ENCODE measurements at regions of chr3 and their contacts with region 1.

Region 1: DNA sequence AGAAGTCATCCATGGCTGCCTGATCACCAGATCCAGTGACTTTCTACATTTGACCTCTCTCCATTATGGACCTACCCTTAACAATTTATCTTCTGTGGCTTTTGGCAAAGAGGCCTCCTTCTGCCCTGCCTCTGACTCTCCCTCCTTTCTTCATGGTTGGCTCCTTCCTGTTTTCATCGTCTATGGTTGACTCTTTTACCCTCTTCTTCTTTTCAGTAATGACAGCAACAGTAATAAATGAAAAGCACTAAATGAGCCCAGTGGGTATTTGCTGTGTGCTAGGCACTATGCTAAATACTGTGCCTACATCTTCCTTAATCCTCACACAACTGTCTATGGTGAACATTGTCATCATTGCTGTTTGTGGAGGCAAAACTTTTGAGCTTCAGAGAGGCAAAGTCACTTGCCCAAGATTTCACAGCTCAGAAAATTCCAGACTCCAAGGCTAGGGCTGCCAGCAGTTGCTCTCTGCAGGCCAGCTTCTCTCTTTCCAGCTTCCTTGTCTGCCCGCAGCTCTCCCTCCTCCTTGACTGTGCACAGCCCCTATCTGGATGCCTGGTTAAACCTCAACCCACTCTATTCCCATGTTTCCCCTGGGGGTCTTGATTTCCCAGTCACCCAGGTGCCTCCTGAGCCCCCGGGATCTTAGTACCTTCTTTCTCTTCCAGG is 24.6 kb downstream of the ITPR1 start:
- H3K4me3 Mint-ChIP-seq: peak overlapping the region; percentile 2
- H3K27ac Mint-ChIP-seq: peak overlapping the region; percentile 45
- H3K4me1 Mint-ChIP-seq: peaks cover 49% of the 10 kb centered on the region
- H3K27me3 Mint-ChIP-seq: no peaks in the 10 kb centered on the region

Region 2: DNA sequence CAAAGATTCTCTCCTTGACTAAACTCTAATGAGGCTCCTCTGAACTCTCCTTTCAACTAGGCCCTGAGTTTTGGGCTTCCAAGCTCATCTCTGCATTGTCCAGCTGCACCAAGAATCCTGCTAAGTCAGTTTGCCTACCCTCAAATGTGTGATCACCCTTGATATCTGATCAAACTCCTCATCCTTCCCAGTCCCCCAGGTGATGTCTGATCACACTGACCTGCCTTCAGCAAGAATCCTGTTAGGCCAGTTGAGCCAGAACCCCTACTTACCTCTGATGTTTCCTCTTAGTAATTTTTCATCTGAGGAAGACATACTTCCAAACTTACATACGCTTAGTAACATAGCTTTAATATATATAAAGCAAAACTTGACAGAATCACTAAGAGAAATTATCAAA is 79.5 kb before region 1 on chr3:
- intact Hi-C with region 1: no loop called
- H3K4me3 Mint-ChIP-seq: no peak overlapping the region
- H3K27ac Mint-ChIP-seq: no peak overlapping the region
- H3K4me1 Mint-ChIP-seq: peaks cover 5% of the 10 kb centered on the region
- H3K27me3 Mint-ChIP-seq: no peaks in the 10 kb centered on the region

Region 3: DNA sequence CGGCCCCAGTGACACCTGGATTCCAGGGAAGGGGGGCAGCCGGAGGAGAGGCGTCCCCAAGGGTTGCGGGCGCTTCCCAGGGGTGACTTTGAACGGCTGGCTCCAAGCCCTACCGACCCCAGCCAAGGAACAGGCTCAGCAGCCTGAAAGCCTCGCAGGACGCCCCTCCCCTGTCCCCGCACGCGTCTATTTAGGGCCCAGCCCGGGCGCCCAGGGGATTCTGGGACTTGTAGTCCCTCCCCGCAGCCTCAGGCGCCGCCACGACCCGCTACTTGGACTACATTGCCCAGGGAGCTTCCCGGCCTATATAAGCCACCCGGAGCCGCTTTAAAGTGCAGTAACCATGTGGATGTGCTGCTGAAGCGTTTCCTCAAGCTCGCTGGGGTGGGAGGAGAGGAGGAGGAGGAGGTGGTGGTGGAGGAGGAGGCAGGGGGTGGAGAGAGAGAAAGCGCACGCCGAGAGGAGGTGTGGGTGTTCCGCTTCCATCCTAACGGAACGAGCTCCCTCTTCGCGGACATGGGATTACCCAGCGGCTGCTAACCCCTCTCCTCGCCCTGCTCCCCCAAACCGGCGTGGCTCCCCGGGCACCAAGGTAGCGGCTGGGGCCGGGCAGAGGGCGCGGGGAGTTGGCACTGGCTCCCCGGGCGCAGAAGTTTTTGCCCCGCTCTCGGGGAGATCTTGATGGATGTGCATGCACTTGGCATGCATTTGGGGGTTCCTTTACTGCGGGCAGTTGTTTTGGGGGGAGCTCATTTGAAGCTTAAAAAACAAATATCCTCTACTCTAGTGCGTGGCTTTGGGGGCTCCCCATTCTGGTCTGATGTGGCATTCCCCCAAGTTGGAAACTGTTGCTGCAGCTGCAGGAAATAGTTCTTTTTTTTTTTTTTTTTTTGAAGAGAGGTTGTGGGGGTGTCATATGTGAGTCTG is 24.5 kb before region 1 on chr3 and contains the start of gene ITPR1:
- intact Hi-C with region 1: loop called (anchors 2 kb)
- H3K4me3 Mint-ChIP-seq: peak within 1 kb of the TSS; percentile 87
- H3K27ac Mint-ChIP-seq: peak within 1 kb of the TSS; percentile 87
- H3K4me1 Mint-ChIP-seq: peaks cover 46% of the 10 kb centered on the region
- H3K27me3 Mint-ChIP-seq: peaks cover 4% of the 10 kb centered on the region

Region 4: GRCh38 chr3:4504340-4505261 is 13.2 kb before region 1 on chr3:
- intact Hi-C with region 1: loop called (anchors 1 kb)
- H3K4me3 Mint-ChIP-seq: peak overlapping the region; percentile 18
- H3K27ac Mint-ChIP-seq: peak overlapping the region; percentile 40
- H3K4me1 Mint-ChIP-seq: peaks cover 51% of the 10 kb centered on the region
- H3K27me3 Mint-ChIP-seq: no peaks in the 10 kb centered on the region

Region 5: GRCh38 chr3:4633078-4634004 is 115.6 kb after region 1 on chr3:
- intact Hi-C with region 1: loop called (anchors 5 kb)
- H3K4me3 Mint-ChIP-seq: no peak overlapping the region
- H3K27ac Mint-ChIP-seq: no peak overlapping the region
- H3K4me1 Mint-ChIP-seq: peaks cover 22% of the 10 kb centered on the region
- H3K27me3 Mint-ChIP-seq: no peaks in the 10 kb centered on the region

Region 6: GRCh38 chr3:4751502-4752101 is 233.8 kb after region 1 on chr3:
- intact Hi-C with region 1: no loop called
- H3K4me3 Mint-ChIP-seq: peak overlapping the region; percentile 58
- H3K27ac Mint-ChIP-seq: peak overlapping the region; percentile 89
- H3K4me1 Mint-ChIP-seq: peaks cover 88% of the 10 kb centered on the region
- H3K27me3 Mint-ChIP-seq: no peaks in the 10 kb centered on the region

Region 7: GRCh38 chr3:5194341-5195159 is 676.8 kb after region 1 on chr3:
- intact Hi-C with region 1: no loop called
- H3K4me3 Mint-ChIP-seq: no peak overlapping the region
- H3K27ac Mint-ChIP-seq: peak overlapping the region; percentile 82
- H3K4me1 Mint-ChIP-seq: peaks cover 87% of the 10 kb centered on the region
- H3K27me3 Mint-ChIP-seq: no peaks in the 10 kb centered on the region